MCF 10A (cell line): ENCODE measurements at regions of chr7 and their contacts with region 1.

Region 1: GRCh38 chr7:41977151-41977651 is 259.8 kb downstream of the GLI3 start:
- DNase-seq: peak; percentile 62
- H3K4me3 Mint-ChIP-seq: no peak overlapping the region
- H3K27ac Mint-ChIP-seq: no peak overlapping the region
- H3K4me1 Mint-ChIP-seq: peaks cover 44% of the 10 kb centered on the region
- H3K27me3 Mint-ChIP-seq: no peaks in the 10 kb centered on the region
- CTCF ChIP-seq: peak; percentile 75

Region 2: DNA sequence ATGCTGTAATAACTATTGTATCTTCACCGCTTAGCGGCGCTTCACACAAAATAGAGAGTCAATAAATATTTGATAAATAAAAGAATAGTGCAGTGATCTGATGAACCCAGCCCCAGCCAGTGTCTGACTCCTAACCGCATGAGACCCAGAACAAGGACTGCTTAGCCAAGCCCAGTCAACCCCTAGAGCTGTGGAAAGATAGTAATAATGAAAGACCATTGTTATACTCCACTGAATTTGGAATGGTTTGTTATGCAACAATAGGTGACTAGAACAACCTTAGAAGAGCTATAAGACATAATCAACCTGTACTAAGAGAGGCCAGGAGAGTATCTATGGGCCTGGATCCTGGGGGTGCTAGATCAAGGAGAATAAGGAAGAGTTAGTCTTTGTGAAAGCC is 43.8 kb before region 1 on chr7:
- CTCF ChIA-PET with region 1: no interaction called
- POLR2A ChIA-PET with region 1: no interaction called
- intact Hi-C with region 1: no loop called
- DNase-seq: no peak
- H3K4me3 Mint-ChIP-seq: no peak overlapping the region
- H3K27ac Mint-ChIP-seq: no peak overlapping the region
- H3K4me1 Mint-ChIP-seq: no peaks in the 10 kb centered on the region
- H3K27me3 Mint-ChIP-seq: no peaks in the 10 kb centered on the region
- CTCF ChIP-seq: no peak

Region 3: GRCh38 chr7:41948503-41948902 is 28.7 kb before region 1 on chr7:
- CTCF ChIA-PET with region 1: interaction called, 137 read pairs
- POLR2A ChIA-PET with region 1: interaction called, 4 read pairs
- intact Hi-C with region 1: loop called (anchors 1 kb)
- DNase-seq: no peak
- H3K4me3 Mint-ChIP-seq: no peak overlapping the region
- H3K27ac Mint-ChIP-seq: no peak overlapping the region
- H3K4me1 Mint-ChIP-seq: peaks cover 5% of the 10 kb centered on the region
- H3K27me3 Mint-ChIP-seq: no peaks in the 10 kb centered on the region
- CTCF ChIP-seq: no peak

Region 4: GRCh38 chr7:41967156-41967555 is 10.0 kb before region 1 on chr7:
- CTCF ChIA-PET with region 1: interaction called, 18 read pairs
- POLR2A ChIA-PET with region 1: no interaction called
- intact Hi-C with region 1: no loop called
- DNase-seq: peak; percentile 73
- H3K4me3 Mint-ChIP-seq: no peak overlapping the region
- H3K27ac Mint-ChIP-seq: peak overlapping the region; percentile 17
- H3K4me1 Mint-ChIP-seq: peaks cover 17% of the 10 kb centered on the region
- H3K27me3 Mint-ChIP-seq: no peaks in the 10 kb centered on the region
- CTCF ChIP-seq: no peak

Region 5: DNA sequence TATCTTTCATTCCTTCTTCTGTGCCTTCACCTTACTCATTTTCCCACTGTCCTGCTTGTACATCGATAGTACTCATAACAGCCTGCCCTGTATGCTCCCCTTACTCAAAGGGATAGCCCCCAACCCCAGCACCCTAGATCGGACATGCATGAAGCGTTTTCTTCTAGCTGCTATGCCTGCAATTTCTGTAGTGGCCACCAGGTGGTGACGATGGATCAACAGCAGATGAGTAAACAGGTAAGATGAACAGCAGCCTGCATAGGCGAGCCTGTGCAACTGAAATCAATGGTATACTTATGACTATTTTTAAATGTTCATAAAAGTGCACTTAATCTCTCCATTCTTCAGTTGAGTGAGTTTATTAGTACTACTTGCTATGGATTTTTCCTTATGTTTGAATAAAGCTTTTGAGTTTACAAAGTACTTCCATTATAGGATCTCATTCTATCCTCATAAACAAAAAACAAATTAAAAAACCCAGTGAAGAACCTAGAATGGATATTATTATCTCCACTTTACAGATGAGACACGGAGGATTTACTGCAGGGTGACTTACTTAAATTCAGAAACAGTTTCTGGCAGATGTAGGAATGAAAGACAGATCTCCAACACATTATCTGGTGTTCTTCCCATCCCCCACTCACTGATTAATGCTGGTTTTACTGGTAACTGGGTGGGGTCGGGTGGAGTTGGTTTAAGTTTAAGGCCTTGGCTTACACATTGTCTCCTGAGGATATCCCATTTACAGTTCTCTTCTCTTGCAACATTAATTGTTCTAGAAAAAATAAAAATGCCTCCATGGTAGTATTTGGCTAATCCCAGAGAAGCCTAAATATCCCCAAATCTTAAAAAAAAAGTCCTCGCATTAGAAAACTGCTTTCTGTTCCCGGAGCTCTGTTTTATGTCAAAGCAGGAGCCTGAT is 37.7 kb after region 1 on chr7:
- CTCF ChIA-PET with region 1: interaction called, 12 read pairs
- POLR2A ChIA-PET with region 1: interaction called, 3 read pairs
- intact Hi-C with region 1: no loop called
- DNase-seq: peak; percentile 76
- H3K4me3 Mint-ChIP-seq: no peak overlapping the region
- H3K27ac Mint-ChIP-seq: no peak overlapping the region
- H3K4me1 Mint-ChIP-seq: no peaks in the 10 kb centered on the region
- H3K27me3 Mint-ChIP-seq: no peaks in the 10 kb centered on the region
- CTCF ChIP-seq: peak; percentile 88

Region 6: GRCh38 chr7:42071372-42072261 is 94.4 kb after region 1 on chr7:
- CTCF ChIA-PET with region 1: interaction called, 14 read pairs
- POLR2A ChIA-PET with region 1: interaction called, 3 read pairs
- intact Hi-C with region 1: no loop called
- DNase-seq: peak; percentile 65
- H3K4me3 Mint-ChIP-seq: peak overlapping the region; percentile 26
- H3K27ac Mint-ChIP-seq: peak overlapping the region; percentile 84
- H3K4me1 Mint-ChIP-seq: peaks cover 46% of the 10 kb centered on the region
- H3K27me3 Mint-ChIP-seq: no peaks in the 10 kb centered on the region
- CTCF ChIP-seq: no peak

Region 7: DNA sequence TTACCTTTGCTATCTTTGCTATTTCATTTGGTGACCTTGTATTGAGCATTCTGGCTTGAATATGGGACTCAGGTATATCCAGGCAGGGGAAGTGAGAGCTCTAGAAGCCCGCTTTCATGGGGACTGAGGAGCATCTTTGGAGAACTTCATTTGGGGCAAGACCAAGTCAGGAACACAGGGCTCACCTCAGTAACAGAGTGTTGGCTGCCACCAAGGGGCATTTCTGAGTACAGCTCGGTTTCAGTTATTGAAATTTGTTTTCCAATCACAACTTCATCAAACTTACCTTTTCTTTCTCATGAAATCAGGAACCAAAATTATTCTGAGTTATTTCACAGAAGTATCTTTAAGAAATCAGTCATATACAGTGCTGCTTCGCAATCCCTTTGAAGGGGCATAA is 597.5 kb after region 1 on chr7:
- CTCF ChIA-PET with region 1: interaction called, 17 read pairs
- POLR2A ChIA-PET with region 1: no interaction called
- intact Hi-C with region 1: loop called (anchors 2 kb)
- DNase-seq: peak; percentile 31
- H3K4me3 Mint-ChIP-seq: no peak overlapping the region
- H3K27ac Mint-ChIP-seq: no peak overlapping the region
- H3K4me1 Mint-ChIP-seq: peaks cover 15% of the 10 kb centered on the region
- H3K27me3 Mint-ChIP-seq: no peaks in the 10 kb centered on the region
- CTCF ChIP-seq: peak; percentile 43

Region 8: GRCh38 chr7:42831718-42832431 is 854.7 kb after region 1 on chr7:
- CTCF ChIA-PET with region 1: interaction called, 14 read pairs
- POLR2A ChIA-PET with region 1: no interaction called
- intact Hi-C with region 1: loop called (anchors 1 kb)
- DNase-seq: peak; percentile 61
- H3K4me3 Mint-ChIP-seq: no peak overlapping the region
- H3K27ac Mint-ChIP-seq: no peak overlapping the region
- H3K4me1 Mint-ChIP-seq: peaks cover 16% of the 10 kb centered on the region
- H3K27me3 Mint-ChIP-seq: no peaks in the 10 kb centered on the region
- CTCF ChIP-seq: peak; percentile 61